ENCODE measurements at regions of chr7 and their contacts with region 1.

Region 1: GRCh38 chr7:16982640-16983350 is 101.0 kb upstream of the AGR3 start:
- DNase-seq: no peak
- ATAC-seq: peak in 5 of 8 donors; percentile 33 to 65 (median 41)
- H3K4me3 ChIP-seq: peak overlapping the region in 1 of 10 donors; percentile 0
- H3K27ac ChIP-seq: no peak overlapping the region
- H3K4me1 ChIP-seq: peaks cover 0 to 28% (median 6%) of the 10 kb centered on the region in 9 donors
- H3K27me3 ChIP-seq: no peaks in the 10 kb centered on the region
- CTCF ChIP-seq: peak; percentile 76 to 97 (median 93)

Region 2: DNA sequence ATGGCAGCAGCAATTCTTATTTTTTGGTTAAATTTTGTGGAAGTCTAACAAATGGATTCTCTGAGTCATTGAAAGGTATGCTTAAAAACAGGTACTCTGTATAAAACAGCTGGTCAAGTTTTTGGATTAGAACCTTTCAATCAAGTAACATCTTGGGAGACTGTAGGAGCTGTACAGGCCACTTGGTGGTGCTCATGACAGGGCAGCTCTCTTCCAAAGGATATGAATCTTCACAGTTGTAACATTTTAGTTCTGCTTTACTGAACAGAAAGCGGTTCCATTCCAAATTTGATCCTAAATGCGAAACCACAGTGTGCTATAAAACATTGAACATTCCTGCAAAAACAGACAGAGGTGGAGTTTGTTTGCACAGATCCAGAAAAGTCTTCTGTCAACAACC is 56.5 kb before region 1 on chr7:
- intact Hi-C with region 1: loop called in 2 of 10 experiments (anchors 2 to 5 kb)
- DNase-seq: peak in 1 of 2 donors; percentile 21
- ATAC-seq: peak in 7 of 8 donors; percentile 52 to 87 (median 81)
- H3K4me3 ChIP-seq: no peak overlapping the region
- H3K27ac ChIP-seq: no peak overlapping the region
- H3K4me1 ChIP-seq: peaks cover 0 to 15% (median 0%) of the 10 kb centered on the region in 9 donors
- H3K27me3 ChIP-seq: no peaks in the 10 kb centered on the region
- CTCF ChIP-seq: peak in 8 of 9 donors; percentile 46 to 76 (median 66)

Region 3: GRCh38 chr7:16933296-16934279 is 49.2 kb before region 1 on chr7:
- intact Hi-C with region 1: loop called in 1 of 10 experiments (anchors 5 kb)
- DNase-seq: no peak
- ATAC-seq: peak in 3 of 8 donors; percentile 29 to 45 (median 38)
- H3K4me3 ChIP-seq: no peak overlapping the region
- H3K27ac ChIP-seq: no peak overlapping the region
- H3K4me1 ChIP-seq: peaks cover 0 to 31% (median 0%) of the 10 kb centered on the region in 9 donors
- H3K27me3 ChIP-seq: no peaks in the 10 kb centered on the region
- CTCF ChIP-seq: no peak

Region 4: DNA sequence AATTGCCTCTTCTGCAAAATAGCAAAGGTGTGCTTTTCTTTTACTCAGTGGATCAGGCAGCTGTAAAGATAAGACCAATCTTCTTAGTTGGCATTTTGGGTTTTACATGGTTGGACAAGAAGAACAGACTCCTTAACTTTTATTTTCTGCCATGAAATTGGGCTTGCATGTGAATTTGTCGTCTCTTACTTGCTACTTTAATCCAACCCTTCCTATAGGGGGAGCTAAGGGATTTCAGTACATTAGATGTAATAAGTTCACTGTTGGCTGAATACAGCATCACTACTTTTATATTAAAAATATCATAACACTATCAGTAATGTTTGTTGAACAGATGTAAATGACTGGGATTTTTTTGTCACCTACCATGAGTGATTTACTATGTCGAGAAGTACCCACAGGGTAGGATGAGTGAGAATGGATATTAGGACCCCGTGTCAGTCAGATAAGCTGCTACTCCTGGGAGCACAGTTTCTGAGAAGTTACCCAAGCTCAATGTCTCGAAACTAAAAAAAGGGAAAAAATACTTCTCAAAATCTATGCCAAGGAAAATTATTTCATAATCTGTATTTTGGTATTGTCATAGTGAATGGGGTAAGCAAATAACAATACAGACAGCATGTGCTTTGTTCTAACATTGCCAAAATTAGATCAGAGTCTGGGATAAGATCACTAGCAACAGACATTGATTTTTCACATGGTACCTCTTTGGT is 26.4 kb after region 1 on chr7:
- intact Hi-C with region 1: no loop called
- DNase-seq: no peak
- ATAC-seq: peak in 7 of 8 donors; percentile 61 to 74 (median 69)
- H3K4me3 ChIP-seq: no peak overlapping the region
- H3K27ac ChIP-seq: peak overlapping the region in 4 of 10 donors; percentile 11 to 77 (median 38)
- H3K4me1 ChIP-seq: peaks cover 0 to 41% (median 8%) of the 10 kb centered on the region in 9 donors
- H3K27me3 ChIP-seq: no peaks in the 10 kb centered on the region
- CTCF ChIP-seq: peak in 8 of 9 donors; percentile 5 to 61 (median 53)

Region 5: GRCh38 chr7:17046666-17047065 is 63.9 kb after region 1 on chr7:
- intact Hi-C with region 1: no loop called
- DNase-seq: no peak
- ATAC-seq: no peak
- H3K4me3 ChIP-seq: no peak overlapping the region
- H3K27ac ChIP-seq: no peak overlapping the region
- H3K4me1 ChIP-seq: peaks cover 0 to 24% (median 13%) of the 10 kb centered on the region in 9 donors
- H3K27me3 ChIP-seq: no peaks in the 10 kb centered on the region
- CTCF ChIP-seq: no peak

Region 6: DNA sequence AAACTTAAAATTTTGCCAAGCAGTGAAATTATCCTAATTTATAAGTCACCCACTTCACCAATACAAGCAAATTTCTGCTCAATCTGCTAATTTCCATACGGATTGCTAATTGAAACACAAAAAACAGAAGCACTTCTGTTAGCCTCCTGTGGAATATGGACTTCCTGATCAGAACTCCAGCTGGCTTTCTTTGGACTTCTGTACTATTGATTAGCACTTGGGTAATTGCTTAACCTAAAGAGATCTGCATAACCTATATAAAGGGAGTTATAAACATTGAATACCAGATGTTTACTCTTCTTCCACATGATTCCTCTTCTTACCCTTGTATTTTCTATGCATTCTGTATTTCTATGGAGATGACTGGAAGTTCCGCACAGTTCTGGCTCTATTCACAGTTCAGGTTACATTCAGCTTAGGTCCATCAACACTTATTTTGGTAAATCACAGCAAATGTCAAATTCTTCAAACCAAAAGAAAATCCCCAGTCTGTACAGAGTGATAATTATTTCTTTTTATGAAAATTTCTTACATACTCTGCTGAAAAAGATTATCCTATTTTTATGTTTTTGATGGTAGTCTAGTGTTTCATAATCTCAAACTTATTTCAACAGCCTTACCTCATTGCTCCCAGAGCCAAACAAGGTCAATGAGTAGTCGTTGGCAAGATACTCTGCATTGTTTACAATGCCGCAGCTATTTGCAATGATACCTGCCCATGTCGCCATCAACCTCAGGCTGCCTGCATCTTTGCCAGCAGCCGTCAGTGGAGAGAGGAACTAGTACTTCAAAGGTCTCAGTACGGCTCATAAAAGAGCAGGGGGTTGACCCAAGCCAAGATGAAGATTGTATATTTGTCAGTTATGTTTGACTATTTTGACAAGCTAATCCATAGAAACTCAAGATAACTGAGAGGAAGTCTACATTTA is 541.3 kb after region 1 on chr7:
- intact Hi-C with region 1: loop called in 2 of 10 experiments (anchors 5 to 10 kb)
- DNase-seq: no peak
- ATAC-seq: peak in 4 of 8 donors; percentile 46 to 74 (median 65)
- H3K4me3 ChIP-seq: no peak overlapping the region
- H3K27ac ChIP-seq: peak overlapping the region in 5 of 10 donors; percentile 11 to 46 (median 22)
- H3K4me1 ChIP-seq: peaks cover 0 to 45% (median 20%) of the 10 kb centered on the region in 9 donors
- H3K27me3 ChIP-seq: no peaks in the 10 kb centered on the region
- CTCF ChIP-seq: no peak

Region 7: DNA sequence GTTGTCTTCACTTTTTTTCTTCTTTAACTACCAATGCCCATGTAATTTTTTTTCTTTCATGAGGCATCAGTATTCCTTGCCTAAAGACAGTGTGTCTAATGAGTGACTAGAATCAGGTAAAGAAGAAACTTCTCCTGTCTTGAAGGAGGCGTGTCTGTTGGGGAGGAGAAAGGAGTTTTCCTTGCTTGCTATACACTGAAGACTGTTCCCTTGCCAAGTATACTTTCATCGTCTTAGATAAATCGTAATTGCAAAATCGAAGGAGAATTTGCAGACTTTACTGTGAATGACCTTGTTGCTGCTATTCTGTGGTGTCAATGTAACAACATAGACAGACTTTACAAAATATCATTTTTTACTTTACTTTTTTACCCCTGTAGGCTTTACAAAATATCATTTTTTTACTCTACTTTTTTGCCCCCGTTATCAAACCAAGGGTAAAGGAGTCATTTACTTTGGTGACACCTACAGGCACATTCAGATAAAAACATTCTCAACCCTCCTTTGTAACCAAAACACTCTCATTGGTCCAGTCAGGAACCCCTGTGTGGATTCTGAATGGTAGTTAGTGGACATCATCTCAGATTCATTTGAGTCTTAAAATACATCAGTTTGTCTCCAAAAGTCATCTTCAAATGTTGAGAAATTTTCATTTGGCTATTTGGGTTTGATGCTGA is 548.1 kb after region 1 on chr7:
- intact Hi-C with region 1: loop called in 9 of 10 experiments (anchors 2 to 10 kb)
- DNase-seq: no peak
- ATAC-seq: peak in 1 of 8 donors; percentile 49
- H3K4me3 ChIP-seq: no peak overlapping the region
- H3K27ac ChIP-seq: no peak overlapping the region
- H3K4me1 ChIP-seq: peaks cover 0 to 29% (median 0%) of the 10 kb centered on the region in 9 donors
- H3K27me3 ChIP-seq: no peaks in the 10 kb centered on the region
- CTCF ChIP-seq: peak in 8 of 9 donors; percentile 12 to 61 (median 43)

Region 8: DNA sequence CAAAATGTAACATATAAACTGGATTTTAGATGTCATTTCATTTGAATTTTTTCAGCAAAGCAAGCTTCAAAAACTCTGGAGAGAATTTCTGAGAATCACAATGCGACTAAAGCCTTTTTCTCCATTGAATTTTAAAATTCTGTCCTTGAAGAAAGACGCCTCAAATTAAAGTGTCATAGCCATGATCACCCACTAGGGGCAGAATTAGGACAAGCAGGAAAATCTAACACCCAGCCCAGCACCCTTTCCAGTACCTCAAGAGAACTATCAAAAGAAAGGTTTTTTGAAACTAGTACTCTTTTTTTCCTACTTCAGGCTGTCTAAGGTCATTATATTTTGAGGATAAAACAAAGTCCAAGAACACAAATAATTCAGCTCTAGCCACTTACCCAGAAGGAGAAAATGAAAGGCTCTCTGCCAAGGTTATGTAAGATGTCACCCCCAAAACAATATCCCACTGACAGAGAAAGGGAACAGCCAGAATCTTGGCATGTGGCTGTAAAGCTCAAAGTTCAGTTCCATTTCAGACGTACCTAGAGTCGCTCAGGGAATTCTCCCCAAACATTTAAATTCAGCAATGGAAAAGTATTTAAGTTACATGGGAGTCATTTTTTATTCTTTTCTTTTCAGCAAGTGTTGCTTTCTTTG is 658.1 kb after region 1 on chr7:
- intact Hi-C with region 1: loop called in 6 of 10 experiments (anchors 2 to 10 kb)
- DNase-seq: peak in 1 of 2 donors; percentile 41
- ATAC-seq: no peak
- H3K4me3 ChIP-seq: no peak overlapping the region
- H3K27ac ChIP-seq: no peak overlapping the region
- H3K4me1 ChIP-seq: peaks cover 0 to 5% (median 0%) of the 10 kb centered on the region in 9 donors
- H3K27me3 ChIP-seq: no peaks in the 10 kb centered on the region
- CTCF ChIP-seq: peak; percentile 48 to 75 (median 65)

Region 9: DNA sequence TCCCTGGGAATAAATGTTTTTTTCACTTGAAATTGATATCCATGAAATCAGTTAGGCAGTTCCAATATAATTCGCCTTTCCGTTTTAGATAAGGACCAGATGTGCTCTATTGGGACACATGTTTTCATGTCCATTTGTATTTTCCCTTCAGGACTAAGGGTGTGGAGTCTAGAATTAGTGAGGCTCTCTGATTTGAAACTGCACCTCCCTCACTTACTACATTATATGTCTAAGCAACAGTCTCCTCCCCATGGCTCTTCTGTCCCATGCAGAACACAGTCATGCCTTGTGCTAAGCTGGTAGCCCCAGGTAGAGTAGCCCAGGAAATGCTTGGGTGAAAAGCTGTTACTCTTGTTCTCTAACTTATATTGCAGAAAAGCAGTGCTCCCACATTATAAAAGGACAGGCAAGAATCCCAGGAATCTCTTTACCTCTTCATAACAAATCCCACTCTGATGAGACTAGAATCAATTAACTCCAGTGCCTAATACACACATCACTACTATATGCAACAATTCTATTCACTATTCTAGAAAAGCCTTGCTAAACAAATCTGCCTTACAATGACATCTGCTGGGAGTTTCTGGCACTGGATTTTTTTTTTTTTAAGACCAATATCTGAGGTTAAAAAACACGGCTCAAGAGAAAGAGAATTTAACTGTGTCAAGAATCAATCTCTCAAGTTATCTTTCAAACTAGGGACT is 663.6 kb after region 1 on chr7:
- intact Hi-C with region 1: loop called in 6 of 10 experiments (anchors 2 to 10 kb)
- DNase-seq: no peak
- ATAC-seq: peak in 2 of 8 donors; percentile 9 to 58
- H3K4me3 ChIP-seq: no peak overlapping the region
- H3K27ac ChIP-seq: no peak overlapping the region
- H3K4me1 ChIP-seq: peaks cover 0 to 9% (median 0%) of the 10 kb centered on the region in 9 donors
- H3K27me3 ChIP-seq: no peaks in the 10 kb centered on the region
- CTCF ChIP-seq: peak in 8 of 9 donors; percentile 7 to 62 (median 44)

Measured in heart right ventricle (tissue), 16 donors.